Activated naive CD4-positive, alpha-beta T cell treated with anti-CD3 and anti-CD28 coated beads for 36 hours (primary cell): ENCODE measurements at regions of chr16 and their contacts with region 1.

Region 1: DNA sequence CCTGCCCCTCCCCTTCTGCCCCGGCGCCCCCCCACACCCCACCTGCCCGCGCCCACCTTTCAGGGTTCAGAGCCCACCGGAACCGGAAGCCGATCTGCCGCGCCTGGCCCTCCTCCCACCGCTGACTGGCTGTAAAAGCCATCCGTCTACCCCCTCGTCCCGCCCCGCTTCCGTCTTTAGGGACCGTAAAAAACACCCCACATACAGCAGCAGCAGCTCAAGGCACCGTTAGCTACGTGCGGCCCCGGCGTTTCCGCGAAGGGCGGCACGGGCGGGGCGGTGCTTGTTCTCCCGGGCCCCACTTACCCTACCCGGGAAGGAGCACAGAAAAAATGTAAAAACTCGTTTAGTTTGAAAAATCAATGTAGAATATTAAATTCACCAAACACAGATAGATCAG is at the start of gene MRPL28:
- DNase-seq: peak; percentile 97
- H3K4me3 Mint-ChIP-seq: peak within 1 kb of the TSS; percentile 81
- H3K27ac Mint-ChIP-seq: peak within 1 kb of the TSS; percentile 85
- H3K4me1 Mint-ChIP-seq: peaks cover 14% of the 10 kb centered on the region
- H3K27me3 Mint-ChIP-seq: no peaks in the 10 kb centered on the region
- total RNA-seq, gene MRPL28: 68.3 to 74.0 TPM

Region 2: GRCh38 chr16:381789-382717 is 11.6 kb after region 1 on chr16 and contains the start of gene PGAP6:
- CTCF ChIA-PET with region 1: interaction called, 5 read pairs
- intact Hi-C with region 1: loop called (anchors 1 kb)
- DNase-seq: peak; percentile 67
- H3K4me3 Mint-ChIP-seq: peak within 1 kb of the TSS; percentile 80
- H3K27ac Mint-ChIP-seq: peak within 1 kb of the TSS; percentile 66
- H3K4me1 Mint-ChIP-seq: peaks cover 25% of the 10 kb centered on the region
- H3K27me3 Mint-ChIP-seq: no peaks in the 10 kb centered on the region
- total RNA-seq, gene PGAP6: 19.9 to 20.9 TPM